Activated CD4-positive, alpha-beta memory T cell treated with anti-CD3 and anti-CD28 coated beads, Interleukin-2, amount 10 ng/mL, durations not matched to agents 7 days and 5 days (primary cell): ENCODE measurements at regions of chr10 and their contacts with region 1.

Region 1: DNA sequence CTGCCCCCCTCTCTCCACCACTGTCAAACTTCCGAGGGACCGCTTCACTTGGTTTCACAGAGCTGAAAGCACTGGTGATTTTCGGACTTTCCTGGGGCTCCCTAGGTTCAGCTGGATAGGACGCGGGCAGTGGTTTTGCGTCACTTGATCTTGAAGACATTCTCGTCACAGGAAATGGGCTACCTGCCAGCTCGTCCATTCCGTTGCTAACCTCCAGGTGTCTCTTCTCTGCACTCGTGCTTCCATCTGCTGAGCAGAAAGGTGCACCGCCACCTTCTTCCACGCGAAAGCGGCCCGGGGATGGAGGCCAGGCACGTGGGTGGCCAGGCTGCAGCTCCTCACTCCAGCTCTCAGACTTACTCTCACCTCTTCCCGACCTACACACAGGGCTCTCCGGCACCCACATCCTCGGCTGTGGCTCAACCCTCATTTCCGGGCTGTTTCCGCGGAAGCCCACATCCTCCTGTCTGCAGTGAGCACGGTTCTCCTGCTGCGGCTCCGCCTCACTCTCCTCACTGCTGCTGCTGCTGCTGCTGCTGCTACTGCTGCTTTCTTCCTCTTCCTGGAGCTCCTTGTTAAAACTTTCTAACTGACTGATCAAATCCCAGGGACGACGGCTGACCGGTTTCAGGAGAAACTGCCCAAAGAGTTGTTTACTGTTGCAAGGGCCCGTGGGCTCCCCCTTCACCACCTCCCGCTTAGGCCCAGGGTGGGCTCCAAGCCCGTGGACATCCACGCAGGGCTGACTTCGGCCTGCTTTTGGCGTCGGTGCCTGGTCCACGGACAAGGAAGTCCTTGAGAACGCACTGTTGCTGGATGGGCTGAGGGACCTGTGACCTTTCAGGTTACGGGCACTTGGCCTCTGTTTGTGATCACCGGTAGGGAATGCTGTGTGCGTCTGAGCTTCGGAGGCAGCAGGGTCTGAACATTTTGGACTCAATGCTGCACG is 32.1 kb downstream of the JCAD start:
- DNase-seq: peak; percentile 97
- H3K4me3 Mint-ChIP-seq: peak overlapping the region; percentile 64
- H3K27ac Mint-ChIP-seq: peak overlapping the region; percentile 87
- H3K4me1 Mint-ChIP-seq: peaks cover 47% of the 10 kb centered on the region
- H3K27me3 Mint-ChIP-seq: peaks cover 50% of the 10 kb centered on the region

Region 2: GRCh38 chr10:30041196-30042105 is 14.1 kb after region 1 on chr10:
- CTCF ChIA-PET with region 1: interaction called, 3 read pairs
- POLR2A ChIA-PET with region 1: interaction called, 16 read pairs
- DNase-seq: no peak
- H3K4me3 Mint-ChIP-seq: no peak overlapping the region
- H3K27ac Mint-ChIP-seq: no peak overlapping the region
- H3K4me1 Mint-ChIP-seq: peaks cover 16% of the 10 kb centered on the region
- H3K27me3 Mint-ChIP-seq: peaks cover 58% of the 10 kb centered on the region

Region 3: DNA sequence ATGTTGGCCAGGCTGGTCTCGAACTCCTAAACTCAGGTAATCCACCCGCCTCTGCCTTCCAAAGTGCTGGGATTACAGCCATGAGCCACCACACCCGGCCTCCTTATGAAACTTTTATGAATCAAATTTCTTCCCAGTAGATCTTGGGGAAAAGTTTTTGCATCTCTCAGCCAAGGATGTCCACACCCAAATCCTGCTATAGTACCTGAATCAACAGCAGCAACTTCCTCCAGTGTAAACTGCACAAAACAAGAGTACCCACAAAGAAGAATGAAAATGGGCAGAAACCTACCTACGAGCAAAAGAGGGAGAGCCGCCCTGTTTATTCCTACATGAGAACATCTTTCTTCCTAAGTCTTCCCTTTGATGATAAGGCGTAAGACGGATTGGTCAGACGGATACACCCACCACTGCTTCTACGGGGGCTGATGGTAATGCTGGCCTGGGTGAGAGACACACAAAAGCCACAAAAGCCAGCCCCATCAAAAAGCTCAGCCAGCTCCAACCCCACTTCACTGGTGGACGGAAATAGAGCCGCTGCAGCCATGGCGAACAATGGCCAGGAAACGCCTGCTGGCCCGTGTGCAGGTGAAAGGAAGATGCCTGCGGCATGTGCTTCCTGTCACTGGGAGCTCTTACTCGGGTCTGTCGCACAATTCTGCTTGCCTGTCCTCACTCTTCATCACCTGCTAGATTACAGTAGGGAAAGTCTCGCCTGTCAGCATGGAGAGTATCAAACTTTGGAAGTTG is 21.6 kb after region 1 on chr10:
- CTCF ChIA-PET with region 1: interaction called, 3 read pairs
- POLR2A ChIA-PET with region 1: interaction called, 26 read pairs
- DNase-seq: no peak
- H3K4me3 Mint-ChIP-seq: no peak overlapping the region
- H3K27ac Mint-ChIP-seq: peak overlapping the region; percentile 2
- H3K4me1 Mint-ChIP-seq: peaks cover 33% of the 10 kb centered on the region
- H3K27me3 Mint-ChIP-seq: peaks cover 54% of the 10 kb centered on the region

Region 4: GRCh38 chr10:30098613-30099012 is 71.3 kb after region 1 on chr10:
- CTCF ChIA-PET with region 1: no interaction called
- POLR2A ChIA-PET with region 1: no interaction called
- DNase-seq: no peak
- H3K4me3 Mint-ChIP-seq: no peak overlapping the region
- H3K27ac Mint-ChIP-seq: no peak overlapping the region
- H3K4me1 Mint-ChIP-seq: no peaks in the 10 kb centered on the region
- H3K27me3 Mint-ChIP-seq: peaks cover 44% of the 10 kb centered on the region